WTC11 (cell line): ENCODE measurements at regions of chr9 and their contacts with region 1.

Region 1: DNA sequence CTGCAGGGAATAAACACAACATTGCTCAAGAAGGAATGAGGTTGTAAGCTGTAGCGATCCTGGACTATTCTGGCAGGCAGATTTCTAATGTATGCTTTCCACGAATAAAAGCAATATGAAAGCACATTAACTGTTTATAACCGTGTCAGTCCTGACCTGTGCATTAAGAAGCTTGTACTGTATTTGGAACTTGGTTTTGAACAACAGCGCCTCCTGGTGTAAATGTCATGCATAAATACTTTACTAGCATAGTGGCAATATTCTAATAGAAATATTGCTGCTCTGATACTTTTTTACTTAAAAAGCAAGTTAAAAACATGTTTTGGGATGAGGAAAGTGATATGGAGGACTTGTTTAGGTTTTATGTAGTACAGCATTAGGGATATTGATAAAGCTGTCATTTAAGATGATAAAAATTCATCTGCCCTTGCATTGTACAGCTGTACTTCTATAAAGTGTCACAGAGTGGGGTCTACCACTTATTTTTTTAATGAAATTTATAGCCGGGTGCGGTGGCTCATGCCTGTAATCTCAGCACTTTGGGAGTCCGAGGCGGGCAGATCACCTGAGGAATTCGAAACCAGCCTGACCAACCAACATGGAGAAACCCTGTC is 70.7 kb upstream of the GNE start:
- DNase-seq: no peak
- ATAC-seq: peak; percentile 62
- H3K4me3 Mint-ChIP-seq: no peak overlapping the region
- H3K27ac Mint-ChIP-seq: no peak overlapping the region
- H3K4me1 Mint-ChIP-seq: no peaks in the 10 kb centered on the region
- H3K27me3 Mint-ChIP-seq: no peaks in the 10 kb centered on the region
- CTCF ChIP-seq: peak; percentile 87

Region 2: GRCh38 chr9:36204906-36205547 is 123.9 kb before region 1 on chr9:
- CTCF ChIA-PET with region 1: interaction called, 23 read pairs
- POLR2A ChIA-PET with region 1: no interaction called
- DNase-seq: peak; percentile 38
- ATAC-seq: peak; percentile 93
- H3K4me3 Mint-ChIP-seq: no peak overlapping the region
- H3K27ac Mint-ChIP-seq: no peak overlapping the region; the same call in 1 of the 2 replicates
- H3K4me1 Mint-ChIP-seq: no peaks in the 10 kb centered on the region
- H3K27me3 Mint-ChIP-seq: no peaks in the 10 kb centered on the region
- CTCF ChIP-seq: no peak

Region 3: GRCh38 chr9:36250079-36250478 is 78.8 kb before region 1 on chr9:
- CTCF ChIA-PET with region 1: interaction called, 12 read pairs
- POLR2A ChIA-PET with region 1: interaction called, 3 read pairs
- DNase-seq: no peak
- ATAC-seq: no peak
- H3K4me3 Mint-ChIP-seq: no peak overlapping the region
- H3K27ac Mint-ChIP-seq: no peak overlapping the region
- H3K4me1 Mint-ChIP-seq: no peaks in the 10 kb centered on the region
- H3K27me3 Mint-ChIP-seq: no peaks in the 10 kb centered on the region
- CTCF ChIP-seq: no peak

Region 4: GRCh38 chr9:36258208-36258988 is 70.5 kb before region 1 on chr9 and contains the start of gene GNE:
- CTCF ChIA-PET with region 1: interaction called, 10 read pairs
- POLR2A ChIA-PET with region 1: no interaction called
- DNase-seq: peak; percentile 94
- ATAC-seq: peak; percentile 81
- H3K4me3 Mint-ChIP-seq: peak within 1 kb of the TSS; percentile 88
- H3K27ac Mint-ChIP-seq: peak within 1 kb of the TSS; percentile 25
- H3K4me1 Mint-ChIP-seq: no peaks in the 10 kb centered on the region
- H3K27me3 Mint-ChIP-seq: no peaks in the 10 kb centered on the region
- CTCF ChIP-seq: no peak
- total RNA-seq, gene GNE: 4.6 to 9.0 TPM (median 8.9 TPM) in 3 replicates

Region 5: DNA sequence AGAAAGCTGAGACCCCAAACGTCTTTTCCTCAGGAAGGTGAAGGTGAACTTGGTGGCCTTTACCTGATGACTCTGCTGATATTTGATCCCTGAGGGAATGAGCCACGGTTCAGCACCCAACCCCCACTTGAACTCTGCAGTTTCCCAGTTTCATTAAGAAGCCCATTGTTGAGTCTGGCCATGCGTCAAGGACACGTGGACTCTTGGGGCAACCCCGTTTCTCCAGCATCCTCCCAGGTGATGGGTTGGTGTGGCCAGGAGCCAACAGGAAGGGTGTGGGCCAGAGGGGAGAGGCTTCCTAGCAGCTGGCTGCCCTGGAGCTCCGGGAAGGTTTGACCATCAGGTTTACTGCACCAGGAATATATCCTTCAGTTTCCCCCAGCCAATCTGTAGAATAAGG is 11.1 kb before region 1 on chr9:
- CTCF ChIA-PET with region 1: interaction called, 26 read pairs
- POLR2A ChIA-PET with region 1: interaction called, 3 read pairs
- DNase-seq: peak; percentile 18
- ATAC-seq: peak; percentile 36
- H3K4me3 Mint-ChIP-seq: no peak overlapping the region
- H3K27ac Mint-ChIP-seq: peak overlapping the region; percentile 16; the same call in 1 of the 2 replicates
- H3K4me1 Mint-ChIP-seq: peaks cover 35% of the 10 kb centered on the region
- H3K27me3 Mint-ChIP-seq: no peaks in the 10 kb centered on the region; the same call in 1 of the 2 replicates
- CTCF ChIP-seq: no peak